CD8-positive, alpha-beta memory T cell (primary cell): ENCODE measurements at regions of chr11 and their contacts with region 1.

Region 1: DNA sequence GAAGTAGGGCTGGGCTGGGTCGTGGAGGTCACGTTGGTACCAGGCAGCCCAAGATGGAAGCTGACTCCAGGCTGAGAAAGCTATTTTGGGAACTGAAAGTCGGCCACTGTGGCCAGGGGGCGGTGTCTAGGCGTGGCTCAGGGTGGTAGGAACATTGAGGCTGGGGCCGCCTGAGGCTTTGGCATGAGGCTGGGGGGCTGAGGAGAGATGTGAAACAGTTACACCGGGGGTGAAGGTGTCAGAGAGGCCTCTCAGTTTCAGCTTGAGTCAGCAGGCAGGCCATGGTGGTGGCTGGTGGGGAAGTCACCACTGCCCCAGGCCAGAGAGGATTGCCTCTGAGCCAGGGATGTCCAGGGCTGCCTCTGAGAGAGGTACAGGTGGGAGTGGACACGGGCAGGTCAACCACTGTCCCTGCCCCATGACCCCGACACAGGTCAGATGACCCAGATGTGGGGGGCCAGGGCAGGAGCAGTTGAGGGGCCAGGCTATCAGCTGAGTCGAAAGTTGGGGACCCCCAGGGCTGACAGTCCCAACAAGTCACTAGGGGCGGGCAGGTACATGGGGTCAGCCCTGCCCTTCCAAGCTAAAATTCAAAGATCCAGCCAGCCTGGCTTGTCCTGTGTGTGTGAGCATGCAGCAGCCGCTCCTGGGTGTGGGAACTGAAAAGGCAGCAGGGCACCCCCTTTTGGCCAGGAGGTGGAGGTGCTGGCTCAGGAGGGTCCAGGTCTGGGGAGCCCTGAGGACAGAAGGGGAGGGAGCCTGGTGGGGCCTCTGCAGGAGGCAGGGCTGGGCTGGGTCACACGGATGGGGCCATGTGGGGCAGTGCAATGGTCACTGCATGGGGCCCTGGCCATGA is 7.2 kb downstream of the KCNK7 start:
- DNase-seq: peak; percentile 63 to 88 (median 75)
- H3K4me3 ChIP-seq: no peak overlapping the region
- H3K4me3 Mint-ChIP-seq: peak overlapping the region in 4 of 7 donors; percentile 19 to 57 (median 40)
- H3K27ac ChIP-seq: no peak overlapping the region
- H3K27ac Mint-ChIP-seq: peak overlapping the region; percentile 81 to 97 (median 88)
- H3K4me1 ChIP-seq: peaks cover 17% of the 10 kb centered on the region
- H3K4me1 Mint-ChIP-seq: peaks cover 18 to 29% (median 23%) of the 10 kb centered on the region in 3 donors
- H3K27me3 ChIP-seq: no peaks in the 10 kb centered on the region
- H3K27me3 Mint-ChIP-seq: no peaks in the 10 kb centered on the region

Region 2: GRCh38 chr11:65546217-65546958 is 42.0 kb before region 1 on chr11:
- CTCF ChIA-PET with region 1: interaction called, 258 read pairs
- POLR2A ChIA-PET with region 1: interaction called, 16 read pairs
- DNase-seq: peak; percentile 98 to 99 (median 99)
- H3K4me3 ChIP-seq: peak overlapping the region; percentile 54
- H3K4me3 Mint-ChIP-seq: peak overlapping the region; percentile 68 to 90 (median 83)
- H3K27ac ChIP-seq: peak overlapping the region; percentile 53
- H3K27ac Mint-ChIP-seq: peak overlapping the region; percentile 86 to 97 (median 94)
- H3K4me1 ChIP-seq: peaks cover 42% of the 10 kb centered on the region
- H3K4me1 Mint-ChIP-seq: peaks cover 38 to 49% (median 48%) of the 10 kb centered on the region in 3 donors
- H3K27me3 ChIP-seq: no peaks in the 10 kb centered on the region
- H3K27me3 Mint-ChIP-seq: no peaks in the 10 kb centered on the region

Region 3: DNA sequence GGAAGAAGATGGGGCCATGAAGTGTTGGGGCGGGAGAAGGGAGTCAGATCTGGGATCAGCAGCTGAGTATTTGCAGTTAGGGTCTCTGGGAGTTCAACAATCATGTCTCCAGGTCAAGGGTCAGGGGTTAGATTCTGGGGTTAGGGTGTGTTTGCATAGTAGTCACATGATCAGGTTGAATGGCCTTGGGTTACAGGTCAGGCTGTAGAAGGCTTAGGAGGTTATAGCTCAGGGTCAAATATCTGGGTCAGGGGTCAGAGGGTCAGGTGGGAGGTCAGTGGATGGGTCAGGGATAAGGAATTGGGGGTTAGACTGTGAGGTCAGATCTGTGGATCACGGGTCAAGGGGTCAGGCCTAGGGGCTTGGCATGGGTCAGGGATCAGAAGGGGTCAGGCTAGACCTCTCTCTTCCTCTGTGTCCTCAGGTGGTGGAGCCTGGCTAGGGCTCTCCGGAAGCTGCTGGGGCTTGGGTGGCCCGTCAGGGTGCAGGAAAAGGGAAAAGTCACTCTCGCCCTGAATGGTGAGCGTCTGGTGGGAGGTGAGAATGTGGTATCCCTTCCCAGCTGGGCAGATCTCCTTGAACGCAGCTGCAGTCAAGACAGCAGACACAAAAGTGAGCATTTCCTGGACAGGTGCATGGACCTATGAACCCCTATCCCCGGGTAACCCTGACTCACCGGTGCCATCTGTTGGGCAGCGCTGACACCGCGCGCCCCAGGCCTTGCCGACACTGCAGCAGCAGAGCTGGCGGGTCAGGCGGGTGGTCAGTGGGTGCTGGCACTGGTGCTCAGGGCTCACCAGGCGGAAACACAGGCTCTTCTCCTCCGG is 36.6 kb before region 1 on chr11:
- CTCF ChIA-PET with region 1: interaction called, 258 read pairs
- POLR2A ChIA-PET with region 1: interaction called, 16 read pairs
- DNase-seq: peak; percentile 43 to 73 (median 54)
- H3K4me3 ChIP-seq: peak overlapping the region; percentile 17
- H3K4me3 Mint-ChIP-seq: peak overlapping the region in 5 of 7 donors; percentile 3 to 32 (median 13)
- H3K27ac ChIP-seq: no peak overlapping the region
- H3K27ac Mint-ChIP-seq: peak overlapping the region; percentile 51 to 97 (median 80)
- H3K4me1 ChIP-seq: peaks cover 75% of the 10 kb centered on the region
- H3K4me1 Mint-ChIP-seq: peaks cover 56 to 77% (median 62%) of the 10 kb centered on the region in 3 donors
- H3K27me3 ChIP-seq: no peaks in the 10 kb centered on the region
- H3K27me3 Mint-ChIP-seq: no peaks in the 10 kb centered on the region

Region 4: GRCh38 chr11:65575568-65576231 is 12.7 kb before region 1 on chr11 and contains the start of gene EHBP1L1:
- CTCF ChIA-PET with region 1: interaction called, 66 read pairs
- POLR2A ChIA-PET with region 1: interaction called, 32 read pairs
- DNase-seq: peak; percentile 78 to 87 (median 81)
- H3K4me3 ChIP-seq: peak within 1 kb of the TSS; percentile 89
- H3K4me3 Mint-ChIP-seq: peak within 1 kb of the TSS; percentile 91 to 99 (median 96)
- H3K27ac ChIP-seq: peak within 1 kb of the TSS; percentile 89
- H3K27ac Mint-ChIP-seq: peak within 1 kb of the TSS; percentile 95 to 100 (median 98)
- H3K4me1 ChIP-seq: peaks cover 60% of the 10 kb centered on the region
- H3K4me1 Mint-ChIP-seq: peaks cover 54 to 72% (median 54%) of the 10 kb centered on the region in 3 donors
- H3K27me3 ChIP-seq: no peaks in the 10 kb centered on the region
- H3K27me3 Mint-ChIP-seq: peaks cover 0 to 1% of the 10 kb centered on the region in 2 donors
- total RNA-seq, gene EHBP1L1: 97.3 to 100 TPM